ENCODE measurements at regions of chr1 and their contacts with region 1.

Region 1: GRCh38 chr1:116498789-116499628 is 71.8 kb downstream of the CD58 start:
- DNase-seq: peak; percentile 63 to 81
- H3K4me3 ChIP-seq: no peak overlapping the region
- CTCF ChIP-seq: peak in 1 of 3 donors; percentile 78
- POLR2A ChIP-seq: no peak

Region 2: GRCh38 chr1:116360429-116361173 is 138.4 kb before region 1 on chr1:
- intact Hi-C with region 1: loop called (anchors 10 kb)
- DNase-seq: no peak
- H3K4me3 ChIP-seq: no peak overlapping the region
- CTCF ChIP-seq: no peak
- POLR2A ChIP-seq: no peak

Region 3: GRCh38 chr1:116743535-116743934 is 244.5 kb after region 1 on chr1:
- intact Hi-C with region 1: no loop called
- DNase-seq: no peak
- H3K4me3 ChIP-seq: no peak overlapping the region
- CTCF ChIP-seq: no peak
- POLR2A ChIP-seq: no peak

Measured in lower leg skin (tissue), 4 donors.